Psoas muscle (tissue), 8 donors: ENCODE measurements at regions of chr17 and their contacts with region 1.

Region 1: DNA sequence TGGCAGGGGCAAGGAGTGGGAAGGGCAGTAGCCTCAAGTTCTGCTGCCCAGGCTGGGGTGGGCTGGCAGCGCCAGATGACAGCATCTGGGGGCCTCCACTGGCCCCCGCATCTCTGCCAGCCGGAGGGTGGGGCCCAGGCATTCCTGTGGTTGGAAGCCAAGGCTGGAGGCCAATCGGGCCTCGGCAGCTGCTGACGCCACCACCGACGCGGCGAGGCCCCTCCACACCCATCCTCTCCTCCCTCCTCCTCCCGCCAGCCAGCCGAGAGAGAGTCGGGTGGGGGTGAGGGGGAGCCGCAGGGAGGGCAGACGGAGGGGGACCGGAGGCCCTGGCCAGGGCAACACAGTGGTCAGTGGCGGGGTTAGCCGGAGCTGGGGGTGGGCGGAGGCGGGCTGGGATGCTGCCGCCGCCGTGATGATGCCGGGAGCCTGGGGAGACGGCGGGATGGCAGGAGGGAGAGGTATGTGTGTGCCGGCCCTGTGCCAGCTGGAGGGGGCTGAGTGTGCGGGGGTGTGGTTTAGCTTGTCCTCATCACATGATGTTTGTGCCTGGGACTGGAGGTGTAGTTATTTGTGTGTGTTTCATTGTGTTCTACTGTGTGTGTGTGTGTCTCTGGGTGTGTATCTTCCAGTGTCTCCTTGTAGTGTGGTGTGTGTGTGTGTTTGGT is 36.6 kb downstream of the ARHGAP23 start:
- DNase-seq: peak; percentile 89 to 92
- ATAC-seq: peak; percentile 79 to 81 (median 80)
- H3K4me3 ChIP-seq: peak overlapping the region; percentile 60
- H3K27ac ChIP-seq: peak overlapping the region; percentile 91
- H3K4me1 ChIP-seq: peaks cover 45% of the 10 kb centered on the region
- H3K27me3 ChIP-seq: no peaks in the 10 kb centered on the region
- CTCF ChIP-seq: no peak

Region 2: DNA sequence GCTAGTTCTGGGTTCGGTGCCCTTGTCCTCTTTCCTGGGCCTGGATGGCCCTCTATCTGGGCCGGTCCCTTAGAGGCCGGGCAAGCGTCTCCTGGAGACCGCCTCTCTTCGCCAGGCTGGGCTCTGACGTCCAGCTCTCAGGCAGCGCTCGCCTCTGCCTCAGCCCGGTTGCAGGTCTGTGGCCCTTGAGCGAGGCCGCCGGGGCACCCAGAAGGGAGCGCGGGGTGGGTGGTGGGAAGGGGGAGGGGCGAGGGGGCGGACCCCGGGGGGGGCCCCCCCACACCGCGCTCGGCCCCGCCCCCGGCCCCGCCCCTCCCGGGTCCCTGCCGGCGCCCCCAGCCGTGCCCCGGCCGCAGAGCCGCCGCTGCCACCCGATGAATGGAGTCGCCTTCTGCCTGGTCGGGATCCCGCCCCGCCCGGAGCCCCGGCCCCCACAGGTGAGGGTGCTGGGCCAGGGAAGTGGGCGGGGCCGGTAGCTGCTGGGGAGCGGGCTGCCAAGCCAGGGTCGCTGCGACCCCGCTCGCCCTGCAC is 36.7 kb before region 1 on chr17 and contains the start of gene ARHGAP23:
- intact Hi-C with region 1: loop called in 1 of 2 experiments (anchors 5 kb)
- DNase-seq: peak; percentile 71 to 86
- ATAC-seq: peak; percentile 65 to 69 (median 69)
- H3K4me3 ChIP-seq: peak within 1 kb of the TSS; percentile 95
- H3K27ac ChIP-seq: peak within 1 kb of the TSS; percentile 91
- H3K4me1 ChIP-seq: peaks cover 37% of the 10 kb centered on the region
- H3K27me3 ChIP-seq: no peaks in the 10 kb centered on the region
- CTCF ChIP-seq: no peak
- total RNA-seq, gene ARHGAP23: 23.6 to 35.8 (median 23.7) TPM